Activated CD4-positive, alpha-beta T cell treated with anti-CD3 and anti-CD28 coated beads for 36 hours (primary cell): ENCODE measurements at regions of chr19 and their contacts with region 1.

Region 1: DNA sequence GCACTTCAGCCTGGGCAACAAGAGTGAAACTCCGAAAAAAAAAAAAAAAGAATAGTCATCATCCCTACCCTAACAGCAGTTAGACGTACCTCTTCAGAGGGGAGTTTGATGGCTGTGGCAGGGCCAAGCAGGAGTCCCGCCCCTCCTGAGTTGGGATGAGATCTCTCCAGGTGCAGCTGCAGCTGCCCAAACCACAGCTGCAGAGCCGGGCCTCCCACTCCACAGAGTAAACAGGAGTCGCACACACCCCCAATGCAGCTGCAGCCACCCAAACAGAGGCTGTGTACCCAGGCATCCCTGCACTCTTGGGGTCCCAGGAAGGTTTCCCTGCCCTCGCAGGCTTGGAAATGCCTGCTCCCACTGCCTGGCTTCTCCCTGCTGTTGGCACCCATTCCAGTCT is 17.4 kb upstream of the MLLT1 start:
- DNase-seq: no peak
- ATAC-seq: no peak
- H3K4me3 Mint-ChIP-seq: no peak overlapping the region
- H3K27ac Mint-ChIP-seq: no peak overlapping the region
- H3K4me1 Mint-ChIP-seq: peaks cover 2% of the 10 kb centered on the region
- H3K27me3 Mint-ChIP-seq: no peaks in the 10 kb centered on the region

Region 2: DNA sequence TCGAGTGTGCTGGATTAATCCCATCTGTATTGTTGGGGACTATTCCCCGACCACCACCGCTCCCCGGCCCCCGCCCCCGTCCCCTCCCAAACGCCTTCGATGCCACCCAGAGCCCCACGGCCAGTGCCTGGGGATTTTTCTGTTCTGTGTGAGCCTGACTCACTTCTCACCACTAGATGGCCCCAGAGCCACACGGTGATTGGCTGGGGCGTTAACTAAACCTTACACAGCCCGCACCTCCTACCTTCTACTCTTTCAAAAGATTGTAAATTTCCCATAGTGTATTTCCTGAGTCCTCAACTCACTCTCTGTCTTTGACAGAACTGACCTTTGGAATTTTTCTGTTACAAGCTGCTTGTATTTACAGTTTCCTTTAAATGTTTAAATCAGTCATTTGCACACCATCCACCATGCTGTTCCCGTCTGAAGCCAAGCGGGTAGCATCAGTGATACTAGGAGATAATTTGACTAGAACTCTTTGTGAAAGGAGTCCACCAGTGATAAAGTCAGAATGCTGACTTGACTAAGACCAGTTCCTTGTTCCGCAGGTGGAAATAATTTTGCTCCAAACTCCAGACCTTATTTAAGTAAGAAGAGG is 248.3 kb before region 1 on chr19:
- CTCF ChIA-PET with region 1: interaction called, 3 read pairs
- POLR2A ChIA-PET with region 1: no interaction called
- intact Hi-C with region 1: loop called (anchors 1 to 2 kb)
- DNase-seq: peak; percentile 87
- ATAC-seq: peak; percentile 100
- H3K4me3 Mint-ChIP-seq: no peak overlapping the region
- H3K27ac Mint-ChIP-seq: no peak overlapping the region
- H3K4me1 Mint-ChIP-seq: peaks cover 5% of the 10 kb centered on the region
- H3K27me3 Mint-ChIP-seq: peaks cover 4% of the 10 kb centered on the region

Region 3: DNA sequence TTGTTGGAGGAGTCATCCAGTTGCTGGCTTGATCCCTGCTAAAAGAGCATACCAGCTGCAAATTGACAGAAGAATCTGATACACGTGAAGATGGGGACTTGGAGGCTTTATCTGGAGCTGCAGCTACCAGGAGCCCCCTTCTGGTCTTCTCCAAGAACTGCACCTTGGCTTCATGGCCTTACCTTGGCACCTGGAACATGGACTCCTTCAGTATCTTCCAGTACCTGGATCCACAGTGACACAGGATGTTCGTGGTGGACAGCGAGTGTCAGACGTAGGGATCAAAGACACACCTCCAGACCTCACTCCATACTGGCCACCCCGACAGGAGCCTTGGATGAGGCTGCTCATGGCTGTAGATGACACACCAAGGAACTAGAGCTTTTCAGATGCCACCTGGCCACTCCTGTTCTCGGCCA is 171.6 kb before region 1 on chr19:
- CTCF ChIA-PET with region 1: interaction called, 3 read pairs
- POLR2A ChIA-PET with region 1: interaction called, 5 read pairs
- intact Hi-C with region 1: loop called in 1 of 2 experiments (anchors 1 kb)
- DNase-seq: peak; percentile 75
- ATAC-seq: peak; percentile 84
- H3K4me3 Mint-ChIP-seq: no peak overlapping the region
- H3K27ac Mint-ChIP-seq: no peak overlapping the region
- H3K4me1 Mint-ChIP-seq: no peaks in the 10 kb centered on the region
- H3K27me3 Mint-ChIP-seq: peaks cover 3% of the 10 kb centered on the region

Region 4: DNA sequence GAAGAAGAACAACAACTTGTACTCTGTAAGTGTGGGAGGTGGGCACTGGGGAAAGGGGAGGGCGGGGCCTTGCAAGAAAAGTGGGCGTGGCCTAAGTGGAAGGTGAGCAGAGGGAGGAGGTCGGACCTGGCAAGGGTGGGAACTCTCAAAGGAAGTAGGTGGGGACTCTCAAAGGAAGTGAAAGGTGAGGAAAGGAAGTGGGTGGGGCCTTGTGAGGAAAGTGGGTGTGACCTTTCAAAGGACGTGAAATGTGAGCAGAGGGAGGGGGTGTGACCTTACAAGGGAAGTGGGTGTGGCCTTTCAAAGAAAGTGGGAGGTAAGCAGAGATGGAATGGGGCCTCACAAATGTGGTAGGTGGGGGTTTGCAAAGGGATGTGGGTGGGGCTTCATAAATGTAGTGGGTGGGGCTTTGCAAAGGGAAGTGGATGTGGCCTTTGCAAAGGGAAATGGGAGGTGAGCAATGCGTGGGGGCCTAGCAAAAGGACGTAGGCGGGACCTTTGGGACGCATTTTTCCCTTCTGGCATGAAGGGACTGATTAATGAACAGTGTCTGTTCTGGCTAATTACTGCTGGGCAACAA is 135.8 kb before region 1 on chr19:
- CTCF ChIA-PET with region 1: no interaction called
- POLR2A ChIA-PET with region 1: no interaction called
- intact Hi-C with region 1: loop called (anchors 1 to 5 kb)
- DNase-seq: peak; percentile 71
- ATAC-seq: peak; percentile 85
- H3K4me3 Mint-ChIP-seq: no peak overlapping the region
- H3K27ac Mint-ChIP-seq: no peak overlapping the region
- H3K4me1 Mint-ChIP-seq: peaks cover 7% of the 10 kb centered on the region
- H3K27me3 Mint-ChIP-seq: no peaks in the 10 kb centered on the region

Region 5: DNA sequence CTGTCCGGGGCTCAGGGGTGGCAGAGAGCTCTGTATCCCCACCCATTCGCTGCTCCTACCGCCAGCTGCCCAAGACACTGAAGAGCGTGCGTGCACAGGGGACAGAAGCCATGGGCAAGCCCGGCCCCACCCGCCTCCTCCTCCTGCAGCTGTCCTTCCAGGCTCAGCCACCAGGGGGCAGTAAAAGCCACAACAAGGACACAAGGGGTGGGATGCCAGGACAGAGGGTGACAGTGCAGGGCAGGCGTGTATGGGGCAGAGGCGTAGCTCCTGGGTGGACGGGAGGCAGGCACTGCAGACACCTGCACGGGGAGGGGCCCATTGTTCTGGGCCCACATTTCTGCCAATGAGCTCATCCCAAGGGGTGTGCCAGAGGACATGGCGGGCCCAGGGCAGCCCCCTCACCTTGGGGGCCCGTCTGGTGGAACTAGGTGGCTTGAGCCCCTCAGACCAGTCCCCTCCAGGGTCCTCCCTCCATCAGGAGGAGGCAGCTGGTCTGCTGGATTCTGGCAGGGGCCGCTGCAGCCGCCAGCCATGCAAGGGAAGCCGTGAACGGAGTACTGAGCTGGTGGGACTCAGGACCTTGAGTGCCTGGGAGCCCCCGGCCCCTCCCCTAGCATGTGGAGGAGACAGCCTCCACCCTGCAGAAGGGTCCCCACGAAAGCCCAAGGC is 78.6 kb before region 1 on chr19:
- CTCF ChIA-PET with region 1: interaction called, 6 read pairs
- POLR2A ChIA-PET with region 1: no interaction called
- intact Hi-C with region 1: loop called (anchors 1 kb)
- DNase-seq: peak; percentile 91
- ATAC-seq: peak; percentile 94
- H3K4me3 Mint-ChIP-seq: no peak overlapping the region
- H3K27ac Mint-ChIP-seq: no peak overlapping the region
- H3K4me1 Mint-ChIP-seq: no peaks in the 10 kb centered on the region
- H3K27me3 Mint-ChIP-seq: no peaks in the 10 kb centered on the region